Endothelial cell of umbilical vein (primary cell): ENCODE measurements at regions of chr2 and their contacts with region 1.

Region 1: GRCh38 chr2:182186132-182186735 is 200.6 kb downstream of the PPP1R1C start:
- DNase-seq: peak; percentile 67
- H3K4me3 ChIP-seq: no peak overlapping the region
- H3K27ac ChIP-seq: no peak overlapping the region
- H3K4me1 ChIP-seq: no peaks in the 10 kb centered on the region
- H3K27me3 ChIP-seq: no peaks in the 10 kb centered on the region
- CTCF ChIP-seq: peak; percentile 25 to 32
- POLR2A ChIP-seq: no peak

Region 2: DNA sequence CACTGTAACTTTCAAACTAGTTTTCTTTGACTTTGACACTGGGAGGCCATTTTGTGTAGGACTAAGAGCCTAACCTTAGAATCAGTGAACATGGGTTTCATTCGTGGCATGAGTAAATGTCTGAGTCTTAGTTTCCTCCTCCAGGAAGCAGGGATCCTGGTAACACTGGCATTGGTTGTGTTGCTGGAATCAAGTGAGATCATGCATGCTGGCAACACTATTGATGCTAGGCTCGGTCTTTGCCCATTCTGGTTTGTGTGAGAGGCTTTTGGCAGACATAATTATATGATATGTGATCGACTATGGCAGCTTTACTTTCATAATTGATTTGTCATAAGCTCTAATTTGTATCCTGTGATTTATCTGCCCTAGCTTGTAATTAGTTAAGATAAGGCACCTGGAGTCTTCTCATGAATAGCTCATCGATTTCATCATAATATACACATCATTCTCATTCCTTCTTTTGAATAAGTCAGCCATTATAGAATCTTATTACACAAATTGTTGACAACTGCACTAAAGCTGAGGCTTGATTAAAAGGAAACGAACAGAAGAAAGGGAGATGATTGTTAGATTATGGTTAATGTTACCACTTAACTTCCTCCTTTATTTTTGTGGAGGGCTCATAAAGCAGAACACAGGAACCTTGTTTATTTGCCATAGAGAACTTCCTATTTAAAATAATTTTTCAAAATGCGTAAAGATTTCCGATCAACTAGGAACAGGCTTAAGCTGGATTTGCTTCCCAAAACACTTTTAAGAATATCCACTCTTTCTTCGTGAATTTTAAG is 188.0 kb before region 1 on chr2:
- CTCF ChIA-PET with region 1: no interaction called
- POLR2A ChIA-PET with region 1: no interaction called
- dilution Hi-C with region 1: no loop called
- intact Hi-C with region 1: no loop called
- DNase-seq: no peak
- H3K4me3 ChIP-seq: no peak overlapping the region
- H3K27ac ChIP-seq: no peak overlapping the region
- H3K4me1 ChIP-seq: no peaks in the 10 kb centered on the region
- H3K27me3 ChIP-seq: no peaks in the 10 kb centered on the region
- CTCF ChIP-seq: no peak
- POLR2A ChIP-seq: no peak

Region 3: DNA sequence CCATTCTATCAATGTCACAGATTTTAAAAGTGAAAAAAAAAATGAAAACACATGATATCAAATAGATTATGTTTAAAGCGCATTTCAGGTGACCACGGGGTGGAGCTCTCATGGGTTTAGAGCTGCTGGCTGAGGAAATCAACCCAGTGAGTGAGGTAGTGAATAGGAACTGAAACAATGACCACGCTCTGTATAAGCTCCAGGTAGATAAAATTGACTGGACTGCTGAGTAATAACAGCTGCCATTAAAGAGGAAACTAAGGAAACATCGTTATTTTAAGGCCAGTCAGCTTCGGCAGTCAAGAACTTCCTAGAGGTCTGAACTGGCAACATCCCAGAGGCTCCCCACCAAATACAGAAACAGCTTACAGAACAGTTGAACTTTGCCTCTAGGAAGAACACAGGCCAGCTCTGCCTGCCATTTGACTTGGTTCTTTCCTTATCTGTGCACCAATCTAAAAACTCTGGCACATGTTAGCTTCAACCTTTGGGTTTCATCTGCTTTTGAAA is 54.7 kb after region 1 on chr2:
- CTCF ChIA-PET with region 1: interaction called, 7 read pairs
- POLR2A ChIA-PET with region 1: no interaction called
- dilution Hi-C with region 1: no loop called
- intact Hi-C with region 1: loop called (anchors 5 kb)
- DNase-seq: peak; percentile 69
- H3K4me3 ChIP-seq: no peak overlapping the region
- H3K27ac ChIP-seq: no peak overlapping the region
- H3K4me1 ChIP-seq: peaks cover 4% of the 10 kb centered on the region
- H3K27me3 ChIP-seq: no peaks in the 10 kb centered on the region
- CTCF ChIP-seq: peak; percentile 25 to 36
- POLR2A ChIP-seq: no peak

Region 4: DNA sequence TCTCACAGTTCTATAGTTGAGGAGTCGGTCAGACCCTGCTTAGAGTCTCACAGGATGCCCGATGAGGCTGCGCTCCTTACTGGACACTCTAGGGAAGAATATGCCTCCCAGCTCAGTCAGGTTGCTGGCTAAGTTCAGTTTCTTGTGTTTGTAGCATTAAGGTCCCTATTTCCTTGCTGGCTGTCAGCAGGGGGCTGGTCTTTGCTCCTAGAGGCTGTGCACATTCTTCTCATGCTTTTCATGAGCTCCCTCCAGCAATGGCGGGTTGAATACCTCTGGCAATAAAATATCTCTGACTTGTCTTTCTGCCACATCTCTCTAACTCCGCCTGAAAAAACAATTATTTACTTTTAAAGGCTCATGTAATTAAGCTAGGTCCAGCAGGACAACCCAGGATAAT is 450.5 kb after region 1 on chr2:
- CTCF ChIA-PET with region 1: interaction called, 11 read pairs
- POLR2A ChIA-PET with region 1: no interaction called
- dilution Hi-C with region 1: no loop called
- intact Hi-C with region 1: no loop called
- DNase-seq: no peak
- H3K4me3 ChIP-seq: no peak overlapping the region
- H3K27ac ChIP-seq: no peak overlapping the region
- H3K4me1 ChIP-seq: no peaks in the 10 kb centered on the region
- H3K27me3 ChIP-seq: no peaks in the 10 kb centered on the region
- CTCF ChIP-seq: no peak
- POLR2A ChIP-seq: no peak

Region 5: GRCh38 chr2:182715896-182716668 is 529.8 kb after region 1 on chr2 and contains the start of gene DNAJC10:
- CTCF ChIA-PET with region 1: no interaction called
- POLR2A ChIA-PET with region 1: no interaction called
- dilution Hi-C with region 1: no loop called
- intact Hi-C with region 1: loop called (anchors 5 kb)
- DNase-seq: peak; percentile 98
- H3K4me3 ChIP-seq: peak within 1 kb of the TSS; percentile 65 to 95 (median 95)
- H3K27ac ChIP-seq: peak within 1 kb of the TSS; percentile 88
- H3K4me1 ChIP-seq: peaks cover 32% of the 10 kb centered on the region
- H3K27me3 ChIP-seq: no peaks in the 10 kb centered on the region
- CTCF ChIP-seq: peak in 1 of 2 donors; percentile 0
- POLR2A ChIP-seq: peak; percentile 95
- total RNA-seq, gene DNAJC10: 171 and 201 TPM in 2 replicates

Region 6: GRCh38 chr2:183179156-183179555 is 992.9 kb after region 1 on chr2:
- CTCF ChIA-PET with region 1: no interaction called
- POLR2A ChIA-PET with region 1: no interaction called
- dilution Hi-C with region 1: no loop called
- intact Hi-C with region 1: no loop called
- DNase-seq: peak; percentile 13
- H3K4me3 ChIP-seq: no peak overlapping the region
- H3K27ac ChIP-seq: no peak overlapping the region
- H3K4me1 ChIP-seq: no peaks in the 10 kb centered on the region
- H3K27me3 ChIP-seq: no peaks in the 10 kb centered on the region
- CTCF ChIP-seq: no peak
- POLR2A ChIP-seq: no peak